Activated CD4-positive, alpha-beta memory T cell treated with anti-CD3 and anti-CD28 coated beads, Interleukin-2, amount 10 ng/mL, durations not matched to agents 7 days and 5 days (primary cell): ENCODE measurements at regions of chr13 and their contacts with region 1.

Region 1: GRCh38 chr13:52450012-52450792 is at the start of gene VPS36:
- DNase-seq: peak; percentile 95
- H3K4me3 Mint-ChIP-seq: peak within 1 kb of the TSS; percentile 84
- H3K27ac Mint-ChIP-seq: peak within 1 kb of the TSS; percentile 83
- H3K4me1 Mint-ChIP-seq: peaks cover 43% of the 10 kb centered on the region
- H3K27me3 Mint-ChIP-seq: no peaks in the 10 kb centered on the region
- total RNA-seq, gene VPS36: 41.8 to 43.4 TPM

Region 2: DNA sequence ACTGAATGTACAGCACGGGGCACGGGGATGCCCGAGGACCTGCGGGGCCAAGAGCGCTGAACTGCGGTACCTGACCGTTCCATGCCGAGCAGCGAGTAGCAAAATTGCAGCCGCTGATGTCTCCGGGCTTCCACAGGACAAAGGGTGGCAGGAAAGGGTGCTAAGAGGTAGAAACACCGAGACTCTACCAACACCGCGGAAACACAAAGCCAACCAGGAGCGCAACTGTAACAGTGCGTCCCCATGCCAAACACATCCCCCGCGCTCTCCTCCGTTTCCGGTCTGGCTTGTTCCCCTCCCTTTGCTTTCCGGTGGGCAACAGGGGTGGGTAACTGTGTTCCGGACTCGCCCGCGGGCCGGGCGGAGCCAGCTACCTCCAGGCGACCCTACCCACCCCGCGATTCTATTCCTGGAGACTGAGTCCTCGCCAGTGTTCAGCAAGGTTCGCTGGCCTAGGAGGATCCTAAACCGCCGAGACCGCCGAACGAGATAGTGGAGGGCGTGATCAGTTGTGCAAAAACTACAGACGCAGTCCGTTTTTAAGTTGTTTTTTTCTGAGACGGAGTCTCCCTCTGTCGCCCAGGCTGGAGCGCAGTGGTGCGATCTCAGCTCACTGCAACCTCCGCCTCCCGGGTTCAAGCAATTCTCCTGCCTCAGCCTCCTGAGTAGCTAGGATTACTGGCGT is 255.9 kb before region 1 on chr13:
- CTCF ChIA-PET with region 1: interaction called, 11 read pairs
- POLR2A ChIA-PET with region 1: interaction called, 9 read pairs
- DNase-seq: peak; percentile 90
- H3K4me3 Mint-ChIP-seq: peak overlapping the region; percentile 95
- H3K27ac Mint-ChIP-seq: peak overlapping the region; percentile 97
- H3K4me1 Mint-ChIP-seq: peaks cover 33% of the 10 kb centered on the region
- H3K27me3 Mint-ChIP-seq: no peaks in the 10 kb centered on the region

Region 3: DNA sequence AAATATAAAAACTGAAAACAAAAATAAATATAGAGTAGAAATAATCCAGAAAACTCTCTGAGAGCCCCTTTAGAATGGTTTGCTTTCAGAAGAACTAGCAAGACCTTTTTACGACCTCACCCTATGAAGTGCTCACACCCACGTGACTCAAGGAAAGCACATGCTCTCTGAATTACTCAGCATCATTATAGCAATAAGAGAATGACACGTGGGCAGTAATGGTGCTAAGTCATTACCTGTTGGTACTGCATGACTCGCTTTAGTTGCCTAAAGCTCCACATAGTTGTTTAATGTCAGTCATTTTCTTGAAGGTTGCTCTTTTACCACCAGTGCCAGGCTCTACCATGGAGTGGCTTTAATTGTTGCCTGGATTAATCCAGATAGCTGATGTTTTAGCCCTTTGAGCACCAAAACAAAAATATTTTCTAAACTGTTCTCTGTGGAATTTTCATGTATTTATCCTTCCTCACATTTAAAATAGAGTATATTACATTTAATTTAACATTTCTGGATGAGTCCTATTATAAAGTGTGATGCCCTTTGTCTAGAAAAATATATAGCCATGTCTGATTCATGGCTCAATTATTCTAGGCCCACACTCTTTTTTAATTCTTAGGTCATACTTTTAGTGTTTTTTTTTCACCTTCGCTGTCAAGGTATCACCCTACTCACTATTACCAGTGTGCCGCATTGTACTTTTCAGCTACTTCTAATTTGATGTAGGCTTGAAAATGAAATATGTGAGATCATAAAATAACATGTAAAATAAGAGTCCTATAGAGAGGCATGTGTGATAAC is 101.0 kb before region 1 on chr13:
- CTCF ChIA-PET with region 1: no interaction called
- POLR2A ChIA-PET with region 1: no interaction called
- DNase-seq: no peak
- H3K4me3 Mint-ChIP-seq: no peak overlapping the region
- H3K27ac Mint-ChIP-seq: no peak overlapping the region
- H3K4me1 Mint-ChIP-seq: peaks cover 6% of the 10 kb centered on the region
- H3K27me3 Mint-ChIP-seq: peaks cover 12% of the 10 kb centered on the region

Region 4: DNA sequence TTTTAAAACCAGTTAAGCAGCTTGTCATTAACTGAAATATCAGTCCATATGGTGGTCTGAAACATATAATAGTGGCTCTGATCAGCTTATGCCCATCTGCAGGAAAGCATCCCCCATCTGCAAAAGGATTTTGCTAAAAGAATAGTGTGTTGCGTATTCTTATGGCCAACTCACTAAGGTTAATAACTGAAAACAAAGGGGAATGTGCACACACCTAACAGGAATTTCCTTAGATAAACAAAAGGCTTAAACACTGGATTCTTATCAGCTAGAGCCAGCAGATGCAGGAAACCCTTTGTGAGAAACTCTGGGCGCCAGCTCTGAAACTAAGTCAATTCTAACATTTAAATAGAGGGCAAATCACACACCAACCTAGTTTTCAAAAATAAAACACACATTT is 21.9 kb before region 1 on chr13:
- CTCF ChIA-PET with region 1: interaction called, 14 read pairs
- POLR2A ChIA-PET with region 1: interaction called, 3 read pairs
- DNase-seq: no peak
- H3K4me3 Mint-ChIP-seq: no peak overlapping the region
- H3K27ac Mint-ChIP-seq: no peak overlapping the region
- H3K4me1 Mint-ChIP-seq: no peaks in the 10 kb centered on the region
- H3K27me3 Mint-ChIP-seq: no peaks in the 10 kb centered on the region

Region 5: GRCh38 chr13:52617070-52618060 is 167.2 kb after region 1 on chr13:
- CTCF ChIA-PET with region 1: interaction called, 20 read pairs
- POLR2A ChIA-PET with region 1: interaction called, 15 read pairs
- DNase-seq: peak; percentile 86
- H3K4me3 Mint-ChIP-seq: peak overlapping the region; percentile 95
- H3K27ac Mint-ChIP-seq: peak overlapping the region; percentile 85
- H3K4me1 Mint-ChIP-seq: peaks cover 28% of the 10 kb centered on the region
- H3K27me3 Mint-ChIP-seq: peaks cover 2% of the 10 kb centered on the region

Region 6: GRCh38 chr13:52652196-52652979 is 202.2 kb after region 1 on chr13 and contains the start of gene SUGT1:
- CTCF ChIA-PET with region 1: interaction called, 13 read pairs
- POLR2A ChIA-PET with region 1: interaction called, 23 read pairs
- DNase-seq: peak; percentile 97
- H3K4me3 Mint-ChIP-seq: no peak within 1 kb of the TSS
- H3K27ac Mint-ChIP-seq: no peak within 1 kb of the TSS
- H3K4me1 Mint-ChIP-seq: peaks cover 9% of the 10 kb centered on the region
- H3K27me3 Mint-ChIP-seq: no peaks in the 10 kb centered on the region
- total RNA-seq, gene SUGT1: 50.1 to 51.7 TPM